Activated CD4-positive, alpha-beta T cell treated with anti-CD3 and anti-CD28 coated beads for 36 hours (primary cell): ENCODE measurements at regions of chr11 and their contacts with region 1.

Region 1: DNA sequence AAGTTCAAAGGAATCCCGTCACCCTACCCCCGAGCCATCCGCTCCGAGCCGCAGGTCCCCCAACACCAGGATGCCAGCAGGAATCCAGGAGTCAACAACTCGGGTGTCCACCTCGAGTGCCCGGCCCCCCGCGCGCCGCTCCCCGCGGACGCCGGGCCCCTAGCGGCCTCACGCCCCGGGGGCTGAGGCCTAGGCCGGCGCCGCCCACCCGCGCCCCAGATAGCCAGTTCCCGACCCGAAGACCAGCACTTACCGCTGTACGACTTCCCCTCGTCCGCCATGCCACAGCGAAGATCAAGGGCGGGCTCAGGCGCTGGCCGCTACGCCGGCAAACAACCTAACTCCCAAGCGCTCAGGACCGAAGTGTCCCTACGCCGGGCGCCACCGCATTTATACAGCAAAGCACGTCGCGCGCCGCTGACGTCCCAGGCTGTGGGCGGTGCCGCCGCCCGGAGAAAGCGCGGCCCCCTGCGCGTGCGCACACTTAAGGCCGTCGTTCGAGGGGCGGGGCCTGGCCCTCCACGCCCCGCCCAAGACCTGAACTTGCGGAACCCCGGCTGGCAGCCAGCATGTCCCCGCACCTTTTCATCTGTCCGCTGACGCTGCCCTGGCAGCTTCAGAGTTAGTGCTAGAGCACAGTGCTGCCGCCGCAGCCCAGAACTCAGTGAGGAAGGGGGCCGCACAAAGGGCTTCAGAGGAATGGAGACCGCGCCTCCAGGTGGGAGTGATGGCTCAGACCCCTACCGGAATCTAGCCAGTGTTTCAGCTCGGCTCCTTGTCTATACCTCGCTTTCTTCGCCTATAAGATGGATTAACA is at the start of gene NXF1:
- DNase-seq: peak; percentile 97
- ATAC-seq: peak; percentile 79
- H3K4me3 Mint-ChIP-seq: peak within 1 kb of the TSS; percentile 99
- H3K27ac Mint-ChIP-seq: peak within 1 kb of the TSS; percentile 97
- H3K4me1 Mint-ChIP-seq: peaks cover 29% of the 10 kb centered on the region
- H3K27me3 Mint-ChIP-seq: no peaks in the 10 kb centered on the region
- total RNA-seq, gene NXF1: 89.5 to 97.6 TPM

Region 2: DNA sequence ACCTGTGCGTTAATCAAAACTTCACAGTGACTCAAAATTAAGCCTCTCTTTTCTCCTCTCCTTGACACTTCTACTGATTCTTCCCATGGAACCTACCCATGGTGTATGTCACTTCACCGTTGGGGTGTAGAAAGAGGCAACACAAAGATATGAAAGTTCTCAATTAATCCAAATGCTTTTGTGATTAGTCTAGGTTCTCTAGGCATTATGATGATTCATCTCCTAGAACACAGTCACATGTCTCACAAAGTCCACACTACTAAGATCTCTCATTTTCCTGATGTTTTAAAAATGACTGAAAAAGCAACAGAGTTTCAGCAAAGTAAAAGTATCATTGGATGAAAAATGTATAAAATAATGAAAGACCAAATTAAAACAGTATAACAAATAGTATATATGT is 549.0 kb before region 1 on chr11:
- CTCF ChIA-PET with region 1: no interaction called
- POLR2A ChIA-PET with region 1: no interaction called
- intact Hi-C with region 1: no loop called
- DNase-seq: no peak
- ATAC-seq: no peak
- H3K4me3 Mint-ChIP-seq: no peak overlapping the region
- H3K27ac Mint-ChIP-seq: no peak overlapping the region
- H3K4me1 Mint-ChIP-seq: no peaks in the 10 kb centered on the region
- H3K27me3 Mint-ChIP-seq: peaks cover 5% of the 10 kb centered on the region

Region 3: DNA sequence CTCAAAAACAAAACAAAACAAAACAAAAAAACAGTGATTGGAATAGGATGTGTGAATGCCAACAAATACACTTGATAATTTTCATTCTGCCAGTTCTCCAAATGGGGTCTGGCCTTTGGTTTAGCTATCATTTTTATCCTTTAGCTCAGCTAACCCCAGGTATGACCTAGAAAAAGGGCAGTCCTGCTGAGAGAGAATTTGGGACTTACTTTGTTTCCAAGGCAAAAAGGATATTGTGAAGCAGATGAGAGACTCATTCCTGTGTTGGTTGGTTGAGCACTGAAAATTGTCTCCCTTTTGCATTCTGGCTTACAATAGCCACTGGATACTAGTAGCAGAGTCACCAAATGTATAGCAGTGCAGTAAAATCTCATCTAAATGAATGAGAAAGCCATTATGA is 68.1 kb before region 1 on chr11:
- CTCF ChIA-PET with region 1: no interaction called
- POLR2A ChIA-PET with region 1: no interaction called
- intact Hi-C with region 1: no loop called
- DNase-seq: no peak
- ATAC-seq: no peak
- H3K4me3 Mint-ChIP-seq: no peak overlapping the region
- H3K27ac Mint-ChIP-seq: no peak overlapping the region
- H3K4me1 Mint-ChIP-seq: peaks cover 7% of the 10 kb centered on the region
- H3K27me3 Mint-ChIP-seq: no peaks in the 10 kb centered on the region

Region 4: GRCh38 chr11:62787005-62787759 is 18.1 kb before region 1 on chr11 and contains the start of gene TMEM179B:
- CTCF ChIA-PET with region 1: interaction called, 24 read pairs
- POLR2A ChIA-PET with region 1: interaction called, 7 read pairs
- intact Hi-C with region 1: loop called (anchors 1 kb)
- DNase-seq: peak; percentile 99
- ATAC-seq: peak; percentile 63
- H3K4me3 Mint-ChIP-seq: peak within 1 kb of the TSS; percentile 90
- H3K27ac Mint-ChIP-seq: peak within 1 kb of the TSS; percentile 95
- H3K4me1 Mint-ChIP-seq: peaks cover 42% of the 10 kb centered on the region
- H3K27me3 Mint-ChIP-seq: no peaks in the 10 kb centered on the region
- total RNA-seq, gene TMEM179B: 19.5 to 35.9 TPM

Region 5: DNA sequence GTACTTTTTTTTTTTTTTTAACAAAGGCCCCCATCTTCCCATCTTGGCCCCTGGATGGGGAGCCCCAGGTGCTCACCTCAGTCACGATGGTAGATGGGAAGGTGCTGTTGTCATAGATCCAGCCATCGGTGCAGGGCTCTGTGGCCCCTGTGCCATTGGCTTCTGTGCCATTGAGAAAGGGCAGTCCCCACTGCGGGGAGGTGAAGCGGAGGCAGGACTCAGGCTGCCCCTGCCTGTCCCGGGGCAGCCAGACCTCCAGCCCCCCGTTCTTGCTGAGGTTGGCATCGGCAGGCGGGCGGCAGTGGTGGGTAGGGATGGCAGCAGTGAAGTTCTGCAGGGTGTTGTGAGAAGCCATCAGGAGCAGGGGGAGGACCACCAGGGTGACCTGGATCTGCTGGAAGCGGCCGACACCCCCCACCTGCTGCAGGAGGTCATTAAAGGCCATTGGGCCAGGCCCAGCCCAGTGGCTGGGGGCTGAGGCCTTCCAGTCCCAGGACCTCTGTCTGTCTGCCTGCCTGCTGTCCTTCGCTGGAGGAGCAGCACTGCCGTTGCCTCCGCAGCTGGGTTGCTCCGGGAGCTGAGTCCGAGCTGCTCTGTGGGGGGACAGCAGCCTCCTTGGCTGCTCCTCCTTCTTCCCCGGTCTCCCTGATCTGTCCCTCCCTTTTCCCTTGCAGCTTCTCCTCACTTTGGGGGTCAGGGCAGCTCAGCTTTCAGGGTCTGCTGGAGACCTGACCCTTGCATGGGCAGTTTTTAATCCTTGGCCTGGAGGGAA is 179.1 kb after region 1 on chr11 and contains the start of gene SLC22A6:
- CTCF ChIA-PET with region 1: no interaction called
- POLR2A ChIA-PET with region 1: no interaction called
- intact Hi-C with region 1: no loop called
- DNase-seq: no peak
- ATAC-seq: no peak
- H3K4me3 Mint-ChIP-seq: no peak within 1 kb of the TSS
- H3K27ac Mint-ChIP-seq: no peak within 1 kb of the TSS
- H3K4me1 Mint-ChIP-seq: no peaks in the 10 kb centered on the region
- H3K27me3 Mint-ChIP-seq: peaks cover 9% of the 10 kb centered on the region
- total RNA-seq, gene SLC22A6: not detected